ENCODE measurements at regions of chr14 and their contacts with region 1.

Region 1: DNA sequence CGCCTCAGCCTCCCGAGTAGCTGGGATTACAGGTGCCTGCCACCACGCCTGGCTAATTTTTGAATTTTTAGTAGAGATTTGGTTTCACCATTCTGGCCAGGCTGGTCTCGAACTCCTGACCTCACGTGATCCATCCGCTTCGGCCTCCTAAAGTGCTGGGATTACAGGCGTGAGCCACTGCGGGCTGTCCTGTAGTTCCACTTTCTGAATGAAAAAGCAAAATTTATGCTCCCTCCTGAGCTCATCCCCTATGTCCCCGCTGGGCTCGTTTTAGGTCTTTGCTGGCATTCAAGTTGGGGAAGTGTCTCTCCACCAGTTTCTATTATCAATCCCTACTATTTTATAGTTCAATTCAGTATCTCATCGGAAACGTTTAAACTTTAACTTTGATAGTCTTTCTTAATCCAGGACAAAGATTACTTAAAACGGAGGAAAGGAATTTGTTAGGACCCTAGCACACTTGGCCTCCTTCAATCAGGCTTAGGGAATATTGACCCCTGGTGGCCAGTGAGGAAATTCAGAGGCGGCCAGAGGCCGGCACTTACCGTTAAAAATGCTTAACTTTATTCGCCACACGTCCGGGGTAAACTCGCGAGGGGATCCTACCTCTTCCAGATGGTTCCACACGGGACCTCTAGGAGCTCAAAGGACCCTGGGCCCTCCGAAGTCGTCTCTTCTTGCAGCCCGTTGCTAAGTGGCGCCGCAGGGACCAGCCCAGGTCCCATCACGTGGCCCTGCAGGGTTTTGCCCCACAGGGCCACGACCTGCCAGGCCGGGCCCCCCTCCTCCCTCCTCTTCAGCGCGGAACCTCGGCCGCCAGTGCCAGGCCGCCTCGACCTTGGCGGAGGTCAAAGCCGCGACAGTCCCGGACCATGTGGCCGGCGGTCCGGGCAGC is 11.4 kb upstream of the DNAL1 start:
- DNase-seq: peak; percentile 38 to 63
- ATAC-seq: peak; percentile 88

Region 2: DNA sequence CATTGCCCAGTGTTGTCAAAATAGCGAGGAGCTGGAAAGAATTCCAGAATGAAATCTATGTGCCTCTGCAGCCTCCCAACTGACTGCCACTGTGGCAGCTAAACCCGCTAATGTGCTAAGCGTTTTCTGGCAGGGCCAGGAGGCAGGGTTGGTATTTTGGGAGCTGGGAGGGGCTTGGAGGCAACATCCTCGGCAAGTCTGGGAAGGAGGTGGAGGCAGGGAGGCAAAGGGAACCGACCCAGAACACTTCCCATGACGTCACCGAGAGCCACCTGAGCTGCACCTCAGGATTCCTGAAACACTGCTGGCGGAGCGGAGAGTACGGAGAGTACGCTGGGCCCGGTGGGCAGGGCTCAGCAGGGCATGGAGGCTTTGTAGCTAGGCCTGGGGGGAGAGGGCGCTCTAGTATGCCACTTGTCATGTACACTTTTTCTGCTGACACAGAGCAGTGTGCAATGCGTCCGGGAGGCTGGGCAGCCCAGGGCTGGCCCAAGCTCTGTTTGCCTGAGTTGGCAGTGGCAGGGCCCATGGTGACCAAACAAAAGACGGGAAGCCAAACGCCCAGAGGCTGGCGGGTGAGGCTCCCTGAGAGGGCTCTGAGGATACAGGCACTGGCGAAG is 821.0 kb before region 1 on chr14:
- intact Hi-C with region 1: no loop called
- DNase-seq: peak in 1 of 2 donors; percentile 28
- ATAC-seq: peak; percentile 18

Region 3: GRCh38 chr14:73503648-73504047 is 129.7 kb before region 1 on chr14:
- intact Hi-C with region 1: loop called in 1 of 2 experiments (anchors 5 kb)
- DNase-seq: no peak
- ATAC-seq: no peak

Measured in left colon (tissue), 2 donors.